Ovary (tissue), 10 donors: ENCODE measurements at regions of chr7 and their contacts with region 1.

Region 1: GRCh38 chr7:100691676-100692577 is 2.1 kb downstream of the GIGYF1 start:
- DNase-seq: peak; percentile 79 to 87 (median 85)
- H3K4me3 ChIP-seq: peak overlapping the region; percentile 59
- H3K27ac ChIP-seq: peak overlapping the region in 1 of 2 donors; percentile 34
- H3K4me1 ChIP-seq: peaks cover 15% of the 10 kb centered on the region
- H3K27me3 ChIP-seq: no peaks in the 10 kb centered on the region
- CTCF ChIP-seq: peak; percentile 80 to 86 (median 84)
- EP300 ChIP-seq: no peak
- POLR2A ChIP-seq: no peak

Region 2: DNA sequence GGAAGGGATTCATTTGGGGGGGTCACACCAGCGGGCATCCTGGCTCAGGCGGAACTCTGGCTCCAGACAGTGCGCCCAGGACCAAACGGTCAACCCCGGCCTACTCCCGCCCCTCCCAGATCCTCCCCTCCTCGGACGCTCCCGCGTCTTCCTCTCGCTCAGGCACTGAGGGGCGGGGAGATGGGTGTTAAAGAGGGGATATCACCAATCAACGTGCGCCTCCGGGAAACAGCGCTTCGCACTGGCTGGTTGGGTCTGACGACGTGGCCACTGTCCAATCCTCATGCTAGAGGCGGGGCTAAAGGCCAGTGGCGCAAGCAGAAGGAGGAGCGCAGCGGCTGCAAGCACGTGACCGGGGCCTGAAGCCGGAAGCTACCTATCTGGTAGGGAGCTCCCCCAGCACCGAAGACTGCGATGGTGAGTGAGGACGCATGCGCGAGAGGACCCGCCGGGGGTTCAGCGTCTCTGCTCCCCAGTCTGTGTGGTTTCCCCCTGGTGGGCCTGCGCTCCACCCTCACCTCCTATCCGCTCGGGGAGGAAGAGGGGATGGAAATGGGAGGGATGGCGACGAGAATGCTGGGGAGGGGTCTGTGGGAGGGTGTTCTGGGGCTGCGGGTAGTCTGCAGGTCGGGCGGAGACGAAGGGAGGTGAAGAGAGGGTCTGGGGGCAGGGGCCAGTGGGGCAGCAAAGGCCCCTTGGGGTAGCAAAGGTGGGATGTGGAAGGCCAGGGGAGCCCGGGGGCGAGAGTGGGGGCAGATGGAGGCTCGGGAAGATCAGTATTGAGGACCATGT is 543.2 kb before region 1 on chr7 and contains the start of gene LAMTOR4:
- intact Hi-C with region 1: loop called in 1 of 4 experiments (anchors 5 kb)
- DNase-seq: peak; percentile 98 to 99 (median 99)
- H3K4me3 ChIP-seq: peak within 1 kb of the TSS; percentile 93
- H3K27ac ChIP-seq: peak within 1 kb of the TSS; percentile 1 to 87
- H3K4me1 ChIP-seq: no peaks in the 10 kb centered on the region
- H3K27me3 ChIP-seq: no peaks in the 10 kb centered on the region
- CTCF ChIP-seq: no peak
- EP300 ChIP-seq: no peak
- POLR2A ChIP-seq: peak; percentile 60
- total RNA-seq, gene LAMTOR4: 101 to 245 (median 108) TPM

Region 3: DNA sequence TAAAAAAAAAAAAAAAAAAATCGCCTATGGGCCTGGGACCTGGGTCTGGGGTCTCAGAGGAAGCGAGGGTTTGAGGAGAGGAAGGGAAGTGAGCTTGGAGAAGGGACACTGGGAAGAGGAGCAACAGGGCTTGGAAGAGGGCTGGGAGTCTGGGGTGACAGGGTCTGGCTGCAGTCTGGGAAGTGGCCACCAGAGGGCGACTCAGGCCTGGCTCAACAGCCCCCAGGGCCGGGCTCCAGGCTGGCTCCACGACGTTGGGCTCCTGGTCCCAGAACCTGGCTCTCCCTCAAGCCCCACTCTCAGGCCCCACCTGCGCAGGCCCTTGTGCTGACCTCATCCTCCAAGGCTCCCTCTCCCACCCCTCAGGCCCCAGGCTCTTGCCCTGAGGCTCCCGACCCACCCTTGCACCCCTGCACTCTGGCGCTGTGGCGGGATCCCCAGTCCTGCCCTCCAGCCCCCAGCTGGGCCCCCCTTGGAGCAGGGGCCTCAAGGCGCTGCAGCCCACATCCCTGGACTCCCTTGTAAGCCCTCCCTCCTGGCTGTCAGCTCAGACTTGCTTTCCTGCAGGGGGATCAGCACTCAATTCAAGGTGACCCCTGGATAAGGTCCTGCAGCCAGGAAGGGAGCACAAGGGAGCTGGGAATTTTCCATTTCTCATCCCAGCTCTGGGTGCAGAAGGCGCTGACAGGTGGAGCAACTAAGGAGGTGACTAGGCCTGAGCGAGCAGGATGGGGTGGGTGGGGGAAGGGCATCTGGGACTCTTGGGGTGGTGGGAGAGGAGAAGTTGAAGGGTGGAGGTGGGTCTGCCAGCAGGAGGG is 222.5 kb before region 1 on chr7:
- intact Hi-C with region 1: loop called (anchors 2 to 10 kb)
- DNase-seq: peak; percentile 88 to 94 (median 92)
- H3K4me3 ChIP-seq: no peak overlapping the region
- H3K27ac ChIP-seq: peak overlapping the region in 1 of 2 donors; percentile 42
- H3K4me1 ChIP-seq: peaks cover 7% of the 10 kb centered on the region
- H3K27me3 ChIP-seq: no peaks in the 10 kb centered on the region
- CTCF ChIP-seq: peak; percentile 90 to 93 (median 92)
- EP300 ChIP-seq: no peak
- POLR2A ChIP-seq: no peak

Region 4: DNA sequence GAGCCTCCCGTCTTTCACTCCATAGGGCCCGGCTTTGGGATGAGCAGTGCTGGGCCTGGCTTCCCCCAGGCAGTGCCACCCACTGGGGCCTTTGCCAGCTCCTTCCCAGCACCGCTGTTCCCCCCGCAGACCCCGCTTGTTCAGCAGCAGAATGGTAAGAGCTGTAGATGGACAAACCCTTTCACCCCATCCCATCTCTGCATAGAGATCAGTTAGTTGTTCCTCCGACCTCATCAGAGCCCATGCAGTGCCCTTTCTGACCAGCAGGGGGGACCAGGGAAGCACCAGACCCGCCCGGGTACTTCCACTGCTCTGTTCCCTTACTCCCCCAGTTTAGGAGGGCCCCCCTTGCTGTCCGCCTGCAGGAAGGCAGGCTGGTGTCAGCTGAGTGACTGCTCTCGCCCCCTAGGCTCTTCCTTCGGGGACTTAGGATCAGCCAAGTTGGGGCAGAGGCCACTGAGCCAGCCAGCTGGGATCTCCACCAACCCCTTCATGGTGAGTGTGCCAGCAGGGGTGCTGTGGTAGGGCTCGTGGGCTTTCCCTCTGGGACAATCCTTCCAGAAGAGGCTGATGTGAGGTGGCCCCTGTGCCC is 128.0 kb before region 1 on chr7:
- intact Hi-C with region 1: loop called in 2 of 4 experiments (anchors 5 kb)
- DNase-seq: peak; percentile 74 to 88 (median 85)
- H3K4me3 ChIP-seq: no peak overlapping the region
- H3K27ac ChIP-seq: peak overlapping the region in 1 of 2 donors; percentile 18
- H3K4me1 ChIP-seq: peaks cover 15% of the 10 kb centered on the region
- H3K27me3 ChIP-seq: no peaks in the 10 kb centered on the region
- CTCF ChIP-seq: peak; percentile 79 to 90 (median 87)
- EP300 ChIP-seq: no peak
- POLR2A ChIP-seq: no peak

Region 5: DNA sequence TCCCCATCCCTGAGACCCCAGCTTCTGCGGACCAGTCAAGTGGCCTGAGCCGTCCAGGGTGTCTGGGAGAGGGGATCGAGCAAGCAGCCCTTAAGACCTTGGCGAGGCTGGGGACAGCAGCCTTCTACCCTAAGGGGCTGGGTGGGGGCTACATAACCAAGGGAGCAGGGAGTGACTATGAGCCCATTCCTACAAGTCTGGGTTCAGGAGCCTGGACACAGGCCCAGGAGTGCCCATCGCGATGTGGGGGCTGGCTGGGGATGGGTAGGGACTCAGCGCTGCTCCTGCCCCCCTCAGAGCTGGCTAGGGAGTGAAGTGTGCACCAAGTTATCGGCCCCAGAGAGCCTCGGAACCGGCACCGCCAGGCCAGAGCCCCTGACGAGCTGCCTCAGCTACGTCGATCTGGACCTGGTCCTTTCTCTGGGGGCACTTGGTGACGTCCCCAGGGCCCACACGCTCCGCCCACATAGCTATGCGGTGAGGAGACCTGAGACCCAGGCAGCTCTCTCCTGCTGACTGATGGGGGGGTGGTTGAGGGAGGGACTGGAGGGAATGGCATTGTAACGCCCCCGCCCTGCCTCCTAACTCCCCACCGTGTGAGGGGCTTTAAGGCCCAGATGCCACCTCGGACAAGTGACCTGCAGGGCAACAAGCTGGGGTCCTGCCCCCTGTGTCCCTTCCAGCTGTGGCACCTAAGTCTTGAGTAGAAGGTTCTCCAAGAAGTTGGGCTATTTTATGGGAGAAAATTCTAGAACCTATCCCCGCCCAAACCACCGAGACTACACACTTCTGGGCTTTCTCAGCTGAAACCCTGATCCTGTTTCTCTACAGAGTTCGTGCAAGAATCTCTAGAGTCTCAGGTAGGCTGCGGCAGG is 120.7 kb before region 1 on chr7:
- intact Hi-C with region 1: loop called in 1 of 4 experiments (anchors 5 kb)
- DNase-seq: peak in 1 of 5 donors; percentile 27
- H3K4me3 ChIP-seq: no peak overlapping the region
- H3K27ac ChIP-seq: no peak overlapping the region
- H3K4me1 ChIP-seq: peaks cover 15% of the 10 kb centered on the region
- H3K27me3 ChIP-seq: no peaks in the 10 kb centered on the region
- CTCF ChIP-seq: no peak
- EP300 ChIP-seq: no peak
- POLR2A ChIP-seq: no peak

Region 6: GRCh38 chr7:100745184-100745583 is 53.3 kb after region 1 on chr7:
- intact Hi-C with region 1: no loop called
- DNase-seq: peak; percentile 37 to 78 (median 45)
- H3K4me3 ChIP-seq: no peak overlapping the region
- H3K27ac ChIP-seq: no peak overlapping the region
- H3K4me1 ChIP-seq: no peaks in the 10 kb centered on the region
- H3K27me3 ChIP-seq: no peaks in the 10 kb centered on the region
- CTCF ChIP-seq: no peak
- EP300 ChIP-seq: no peak
- POLR2A ChIP-seq: no peak

Region 7: GRCh38 chr7:101795461-101795860 is 1103.5 kb after region 1 on chr7:
- intact Hi-C with region 1: loop called in 1 of 4 experiments (anchors 5 kb)
- DNase-seq: no peak
- H3K4me3 ChIP-seq: no peak overlapping the region
- H3K27ac ChIP-seq: no peak overlapping the region
- H3K4me1 ChIP-seq: peaks cover 1% of the 10 kb centered on the region
- H3K27me3 ChIP-seq: no peaks in the 10 kb centered on the region
- CTCF ChIP-seq: no peak
- EP300 ChIP-seq: no peak
- POLR2A ChIP-seq: no peak